HepG2 (cell line): ENCODE measurements at regions of chr19 and their contacts with region 1.

Region 1: DNA sequence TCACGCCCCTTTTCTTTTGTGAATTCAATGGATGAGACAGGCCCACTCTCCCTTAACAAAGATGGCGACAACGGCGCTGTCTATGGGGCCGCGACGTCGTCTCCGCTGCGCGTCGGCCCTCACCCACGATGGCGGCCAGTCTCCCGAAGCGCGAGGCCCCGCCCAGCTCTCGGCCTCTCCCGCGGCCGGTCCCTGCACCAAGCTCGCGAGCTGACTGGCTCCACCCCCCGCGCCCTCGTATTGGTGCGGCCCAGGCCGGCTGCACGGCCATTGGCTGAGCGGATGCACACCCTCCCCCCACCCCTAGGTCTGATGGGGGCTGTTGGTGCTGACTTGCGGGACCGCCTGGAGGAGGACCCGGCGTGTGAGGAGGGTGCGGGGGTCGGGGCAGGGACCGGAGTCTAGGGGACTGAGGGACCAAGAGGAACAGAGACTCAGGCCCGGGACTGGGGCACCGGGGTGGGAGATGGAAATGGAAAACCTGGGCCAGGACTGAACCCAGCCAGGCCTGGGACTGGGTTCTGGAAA is 4.8 kb downstream of the SPHK2 start:
- DNase-seq: peak; percentile 82
- ATAC-seq: peak; percentile 74
- H3K4me3 ChIP-seq: peak overlapping the region; percentile 52 to 65 (median 63); a peak in 5 of 6 replicates
- H3K27ac ChIP-seq: peak overlapping the region; percentile 73
- H3K4me1 ChIP-seq: peaks cover 49% of the 10 kb centered on the region
- H3K27me3 ChIP-seq: no peaks in the 10 kb centered on the region
- CTCF ChIP-seq: no peak
- EP300 ChIP-seq: 0 out of 4 replicates have a peak, but pooled peaks of 1 of the 2 experiments have one; percentile 9
- POLR2A ChIP-seq: 0 out of 4 replicates have a peak, but pooled peaks of 1 of the 2 experiments have one; percentile 6
- RAD21 ChIP-seq: no peak

Region 2: DNA sequence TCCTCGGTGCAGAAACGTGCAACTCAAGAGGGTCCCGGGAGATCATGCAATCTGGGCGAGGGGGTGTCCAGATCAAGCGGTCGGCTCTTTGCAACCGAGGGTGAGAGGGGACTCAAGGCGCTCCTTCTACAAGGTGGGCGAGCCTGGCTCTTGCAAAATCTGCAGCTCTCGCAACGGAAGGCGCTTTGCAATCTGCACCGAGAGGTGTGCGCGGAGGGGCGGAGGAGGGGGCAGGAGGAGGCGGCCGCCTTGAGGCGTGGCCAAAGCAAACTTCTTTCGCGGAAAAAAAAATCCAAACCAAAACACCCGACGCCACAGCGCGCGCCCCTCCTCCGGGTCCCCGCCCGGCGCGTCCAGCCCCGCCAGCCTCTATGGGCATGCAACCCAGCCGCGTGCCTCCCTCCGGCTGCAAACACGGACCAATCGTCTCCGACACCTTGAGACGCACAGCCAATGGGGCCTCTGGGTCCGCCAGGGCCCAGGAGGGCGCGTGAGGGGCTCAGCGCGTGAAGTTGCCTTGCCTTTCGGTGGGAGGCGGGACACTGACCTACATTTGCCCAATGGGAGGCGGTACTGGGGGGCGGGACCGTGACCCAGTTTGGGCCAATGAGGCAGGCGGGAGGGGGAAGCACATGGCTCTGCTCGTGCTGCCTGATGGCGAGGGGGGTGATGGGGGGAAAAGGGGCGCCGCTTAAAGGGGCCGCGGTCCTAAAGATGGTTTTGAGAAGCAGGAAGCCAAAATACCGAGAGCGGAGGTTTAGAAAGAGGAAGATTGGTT is 13.2 kb after region 1 on chr19 and contains the start of gene DBP:
- CTCF ChIA-PET with region 1: no interaction called
- POLR2A ChIA-PET with region 1: interaction called, 61 read pairs
- in situ Hi-C with region 1: no loop called
- intact Hi-C with region 1: loop called (anchors 2 kb)
- DNase-seq: peak; percentile 96
- ATAC-seq: peak; percentile 85
- H3K4me3 ChIP-seq: peak within 1 kb of the TSS; percentile 56 to 76 (median 59)
- H3K27ac ChIP-seq: peak within 1 kb of the TSS; percentile 70
- H3K4me1 ChIP-seq: peaks cover 71% of the 10 kb centered on the region
- H3K27me3 ChIP-seq: peaks cover 0 to 8% of the 10 kb centered on the region in 2 experiments; a peak in 3 of 5 replicates
- CTCF ChIP-seq: no peak
- EP300 ChIP-seq: 0 out of 4 replicates have a peak, but pooled peaks of 1 of the 2 experiments have one; percentile 20
- POLR2A ChIP-seq: peak in 1 of 2 experiments; percentile 47; a peak in 2 of 4 replicates
- RAD21 ChIP-seq: no peak
- total RNA-seq, gene DBP: 5.5 and 5.8 TPM in 2 replicates

Region 3: GRCh38 chr19:48660854-48661731 is 37.0 kb after region 1 on chr19:
- CTCF ChIA-PET with region 1: no interaction called
- POLR2A ChIA-PET with region 1: no interaction called
- in situ Hi-C with region 1: no loop called
- intact Hi-C with region 1: no loop called
- DNase-seq: peak; percentile 66
- ATAC-seq: peak; percentile 74
- H3K4me3 ChIP-seq: no peak overlapping the region
- H3K27ac ChIP-seq: no peak overlapping the region
- H3K4me1 ChIP-seq: no peaks in the 10 kb centered on the region
- H3K27me3 ChIP-seq: peaks cover 1 to 6% of the 10 kb centered on the region in 2 experiments; a peak in 2 of 5 replicates
- CTCF ChIP-seq: no peak
- EP300 ChIP-seq: no peak
- POLR2A ChIP-seq: no peak
- RAD21 ChIP-seq: no peak

Region 4: GRCh38 chr19:48674921-48675824 is 51.0 kb after region 1 on chr19:
- CTCF ChIA-PET with region 1: no interaction called
- POLR2A ChIA-PET with region 1: no interaction called
- in situ Hi-C with region 1: no loop called
- intact Hi-C with region 1: no loop called
- DNase-seq: peak; percentile 77
- ATAC-seq: peak; percentile 75
- H3K4me3 ChIP-seq: no peak overlapping the region; a peak in 1 of 6 replicates
- H3K27ac ChIP-seq: no peak overlapping the region
- H3K4me1 ChIP-seq: peaks cover 25% of the 10 kb centered on the region
- H3K27me3 ChIP-seq: peaks cover 4 to 22% of the 10 kb centered on the region in 2 experiments; a peak in 4 of 5 replicates
- CTCF ChIP-seq: peak; percentile 94
- EP300 ChIP-seq: 0 out of 4 replicates have a peak, but pooled peaks of 1 of the 2 experiments have one; percentile 8
- POLR2A ChIP-seq: no peak
- RAD21 ChIP-seq: peak; percentile 91

Region 5: GRCh38 chr19:48685583-48685982 is 61.5 kb after region 1 on chr19:
- CTCF ChIA-PET with region 1: no interaction called
- POLR2A ChIA-PET with region 1: no interaction called
- in situ Hi-C with region 1: no loop called
- intact Hi-C with region 1: no loop called
- DNase-seq: peak; percentile 68
- ATAC-seq: peak; percentile 49
- H3K4me3 ChIP-seq: no peak overlapping the region
- H3K27ac ChIP-seq: peak overlapping the region; percentile 46
- H3K4me1 ChIP-seq: peaks cover 63% of the 10 kb centered on the region
- H3K27me3 ChIP-seq: 0 out of 5 replicates have a peak, but pooled peaks cover 0 to 3% of the 10 kb centered on the region in 2 experiments
- CTCF ChIP-seq: no peak
- EP300 ChIP-seq: no peak
- POLR2A ChIP-seq: no peak
- RAD21 ChIP-seq: no peak